Activated CD4-positive, alpha-beta T cell treated with anti-CD3 and anti-CD28 coated beads for 36 hours (primary cell): ENCODE measurements at regions of chr6 and their contacts with region 1.

Region 1: DNA sequence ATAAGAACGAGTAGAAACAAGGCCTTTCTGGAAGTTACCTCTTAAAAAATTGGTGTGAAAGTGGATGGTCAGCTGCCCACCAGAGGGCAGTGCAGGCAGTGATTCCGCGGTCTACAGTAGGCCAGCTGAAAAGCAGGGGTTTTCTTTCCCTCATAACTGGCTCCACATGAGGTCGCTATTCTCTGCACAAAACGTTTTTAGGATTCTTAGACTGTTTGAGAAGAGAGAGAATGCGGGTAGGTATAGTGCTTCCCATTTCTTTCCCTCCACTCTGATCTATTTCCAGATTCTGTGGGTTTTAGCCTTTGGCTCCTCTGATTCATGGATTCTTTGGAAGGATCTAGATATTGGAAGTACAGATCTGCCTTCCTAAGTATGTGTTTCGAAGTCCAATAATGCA is 14.2 kb downstream of the FIG4 start:
- DNase-seq: peak; percentile 88
- ATAC-seq: peak; percentile 99
- H3K4me3 Mint-ChIP-seq: no peak overlapping the region
- H3K27ac Mint-ChIP-seq: no peak overlapping the region
- H3K4me1 Mint-ChIP-seq: peaks cover 12% of the 10 kb centered on the region
- H3K27me3 Mint-ChIP-seq: no peaks in the 10 kb centered on the region

Region 2: GRCh38 chr6:109526905-109527628 is 178.2 kb before region 1 on chr6:
- CTCF ChIA-PET with region 1: interaction called, 6 read pairs
- POLR2A ChIA-PET with region 1: no interaction called
- intact Hi-C with region 1: loop called (anchors 1 to 5 kb)
- DNase-seq: peak; percentile 66
- ATAC-seq: peak; percentile 84
- H3K4me3 Mint-ChIP-seq: no peak overlapping the region
- H3K27ac Mint-ChIP-seq: no peak overlapping the region
- H3K4me1 Mint-ChIP-seq: no peaks in the 10 kb centered on the region
- H3K27me3 Mint-ChIP-seq: no peaks in the 10 kb centered on the region

Region 3: DNA sequence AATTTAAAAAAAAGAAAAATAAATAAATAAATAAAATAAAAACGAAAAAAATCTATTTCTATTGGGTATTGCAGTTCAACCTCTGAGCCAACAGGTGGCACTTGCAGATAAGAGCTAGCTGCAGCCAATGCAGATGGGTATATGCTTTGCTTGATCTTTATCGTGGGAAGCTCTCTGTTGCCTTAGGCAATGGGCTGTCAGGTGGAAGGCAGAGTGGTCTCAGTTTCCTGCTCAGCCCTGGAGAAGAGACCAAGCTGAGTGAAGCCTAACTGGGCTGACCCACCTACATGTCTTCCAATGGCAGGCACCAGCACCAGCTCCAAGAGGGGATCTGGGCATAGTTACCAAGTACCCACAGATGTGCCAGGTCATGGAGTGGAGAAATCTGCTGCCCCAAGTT is 109.3 kb before region 1 on chr6:
- CTCF ChIA-PET with region 1: interaction called, 8 read pairs
- POLR2A ChIA-PET with region 1: no interaction called
- intact Hi-C with region 1: loop called in 1 of 2 experiments (anchors 1 kb)
- DNase-seq: peak; percentile 44
- ATAC-seq: peak; percentile 75
- H3K4me3 Mint-ChIP-seq: no peak overlapping the region
- H3K27ac Mint-ChIP-seq: no peak overlapping the region
- H3K4me1 Mint-ChIP-seq: peaks cover 8% of the 10 kb centered on the region
- H3K27me3 Mint-ChIP-seq: no peaks in the 10 kb centered on the region

Region 4: DNA sequence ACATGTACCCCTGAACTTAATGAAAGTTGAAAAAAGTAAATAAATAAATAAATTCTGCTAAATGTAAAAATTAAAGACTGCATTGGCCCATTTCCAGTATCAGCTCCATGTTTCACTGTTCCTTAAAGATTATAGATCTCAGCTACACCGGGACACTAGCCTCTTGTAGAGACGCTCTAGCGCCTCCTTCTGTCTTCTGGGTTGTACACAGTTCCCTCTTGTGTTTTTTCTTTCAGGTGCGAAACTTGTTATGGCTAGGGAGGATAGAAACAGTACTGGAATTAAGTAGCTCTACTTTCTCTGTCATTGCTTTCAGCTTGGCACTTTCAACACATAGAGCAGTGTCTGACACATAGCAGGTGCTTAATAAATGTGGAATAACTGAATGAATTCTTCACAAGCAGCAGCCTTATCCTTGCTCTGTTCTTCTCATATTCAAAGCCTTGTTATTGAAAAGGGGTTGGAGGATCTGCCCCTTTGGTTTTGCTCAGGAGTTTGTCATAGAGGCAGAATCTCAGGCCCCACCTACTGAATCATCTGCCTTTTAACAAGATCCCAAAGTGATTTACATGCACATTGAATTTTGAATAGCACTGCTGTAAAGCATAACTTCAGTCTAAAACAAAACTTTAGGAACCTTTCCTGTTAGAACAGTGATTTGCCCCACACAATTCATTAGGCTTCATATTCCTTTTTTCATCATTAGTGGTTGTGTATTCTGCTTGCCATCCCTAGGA is 78.2 kb after region 1 on chr6:
- CTCF ChIA-PET with region 1: no interaction called
- POLR2A ChIA-PET with region 1: no interaction called
- intact Hi-C with region 1: loop called (anchors 1 to 5 kb)
- DNase-seq: peak; percentile 19
- ATAC-seq: peak; percentile 33
- H3K4me3 Mint-ChIP-seq: no peak overlapping the region
- H3K27ac Mint-ChIP-seq: no peak overlapping the region
- H3K4me1 Mint-ChIP-seq: no peaks in the 10 kb centered on the region
- H3K27me3 Mint-ChIP-seq: no peaks in the 10 kb centered on the region

Region 5: GRCh38 chr6:110053395-110054240 is 348.4 kb after region 1 on chr6:
- CTCF ChIA-PET with region 1: interaction called, 5 read pairs
- POLR2A ChIA-PET with region 1: no interaction called
- intact Hi-C with region 1: loop called (anchors 1 kb)
- DNase-seq: no peak
- ATAC-seq: peak; percentile 42
- H3K4me3 Mint-ChIP-seq: no peak overlapping the region
- H3K27ac Mint-ChIP-seq: no peak overlapping the region
- H3K4me1 Mint-ChIP-seq: no peaks in the 10 kb centered on the region
- H3K27me3 Mint-ChIP-seq: no peaks in the 10 kb centered on the region

Region 6: GRCh38 chr6:110656492-110656891 is 951.2 kb after region 1 on chr6:
- CTCF ChIA-PET with region 1: no interaction called
- POLR2A ChIA-PET with region 1: no interaction called
- intact Hi-C with region 1: no loop called
- DNase-seq: no peak
- ATAC-seq: no peak
- H3K4me3 Mint-ChIP-seq: no peak overlapping the region
- H3K27ac Mint-ChIP-seq: no peak overlapping the region
- H3K4me1 Mint-ChIP-seq: peaks cover 6% of the 10 kb centered on the region
- H3K27me3 Mint-ChIP-seq: no peaks in the 10 kb centered on the region